ENCODE measurements at regions of chrX and their contacts with region 1.

Region 1: GRCh38 chrX:47523297-47523696 is 37.7 kb upstream of the ARAF start:
- DNase-seq: peak in 1 of 2 donors; percentile 87
- H3K4me3 ChIP-seq: peak overlapping the region; percentile 53 to 65
- H3K27ac ChIP-seq: no peak overlapping the region
- H3K4me1 ChIP-seq: no peaks in the 10 kb centered on the region
- H3K27me3 ChIP-seq: no peaks in the 10 kb centered on the region
- CTCF ChIP-seq: peak; percentile 80 to 85 (median 82)

Region 2: DNA sequence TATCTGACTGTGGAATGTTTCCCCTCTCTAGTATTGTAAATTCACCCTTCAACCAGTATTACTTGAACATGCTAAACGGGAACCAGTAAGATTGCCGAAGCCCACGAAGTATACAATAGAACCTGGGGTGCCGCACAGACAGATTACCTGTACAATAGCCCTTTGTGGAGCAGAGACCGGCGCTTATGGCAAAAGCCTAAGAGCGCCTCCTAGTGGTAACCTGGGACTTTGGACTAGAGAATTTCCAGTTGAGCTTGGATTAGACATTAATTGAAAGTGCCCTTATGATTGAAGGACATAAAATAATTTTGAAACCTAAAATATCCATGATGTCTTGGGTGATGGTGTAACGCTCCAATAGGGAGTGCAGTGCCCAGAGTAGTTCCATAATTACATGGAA is 138.8 kb before region 1 on chrX:
- intact Hi-C with region 1: loop called (anchors 1 kb)
- DNase-seq: peak in 1 of 2 donors; percentile 84
- H3K4me3 ChIP-seq: no peak overlapping the region
- H3K27ac ChIP-seq: no peak overlapping the region
- H3K4me1 ChIP-seq: no peaks in the 10 kb centered on the region
- H3K27me3 ChIP-seq: no peaks in the 10 kb centered on the region
- CTCF ChIP-seq: peak; percentile 43 to 73 (median 71)

Region 3: DNA sequence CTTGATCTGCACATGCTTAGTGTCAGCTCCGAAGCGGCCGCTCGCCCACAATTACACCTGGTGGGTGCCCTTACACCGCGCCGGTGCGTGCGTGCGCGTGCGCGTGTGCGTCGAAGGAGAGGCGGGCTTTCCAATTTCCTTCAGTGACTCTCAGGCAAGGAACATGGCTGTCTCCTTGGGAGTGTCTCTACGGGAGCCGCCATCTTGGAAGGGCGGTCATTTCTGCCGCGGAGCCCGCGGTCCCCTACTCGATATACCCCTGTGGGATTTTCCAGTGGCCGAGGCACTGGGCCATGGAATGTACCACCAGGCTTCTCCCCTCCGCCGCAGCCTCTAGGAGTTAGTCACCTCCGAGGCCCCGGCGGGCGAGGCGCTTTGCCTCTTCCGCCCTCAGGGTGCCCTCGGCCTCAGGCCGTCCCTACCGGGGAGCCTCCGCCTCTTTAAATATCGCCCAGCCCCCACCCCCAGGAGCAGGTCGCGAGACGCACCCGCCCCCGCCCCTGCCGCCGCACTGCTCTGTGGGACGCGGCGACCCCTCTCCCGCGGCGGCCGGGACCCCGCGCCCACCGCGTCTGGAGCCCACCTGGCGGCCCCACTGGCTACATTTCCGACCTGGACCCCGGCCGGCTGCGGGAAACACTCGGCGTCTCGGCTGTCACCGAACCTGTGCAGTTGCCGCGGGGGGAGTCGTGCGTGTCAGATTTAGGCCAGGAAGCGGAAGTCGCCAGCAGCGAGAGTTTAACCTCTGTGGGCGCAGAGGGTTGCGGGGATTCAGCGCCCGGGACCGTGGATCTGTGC is 40.6 kb before region 1 on chrX and contains the start of gene ZNF41:
- intact Hi-C with region 1: loop called (anchors 5 kb)
- DNase-seq: peak; percentile 18 to 82
- H3K4me3 ChIP-seq: peak within 1 kb of the TSS; percentile 58 to 77
- H3K27ac ChIP-seq: peak within 1 kb of the TSS; percentile 93 to 94
- H3K4me1 ChIP-seq: no peaks in the 10 kb centered on the region
- H3K27me3 ChIP-seq: no peaks in the 10 kb centered on the region
- CTCF ChIP-seq: no peak
- total RNA-seq, gene ZNF41: 2.7 TPM